H1 (cell line): ENCODE measurements at regions of chr5 and their contacts with region 1.

Region 1: GRCh38 chr5:142699184-142699720 is 13.4 kb upstream of the FGF1 start:
- DNase-seq: peak; percentile 74 to 96
- H3K4me3 ChIP-seq: no peak overlapping the region
- H3K27ac ChIP-seq: no peak overlapping the region
- H3K4me1 ChIP-seq: peaks cover 3 to 30% (median 14%) of the 10 kb centered on the region in 4 experiments
- H3K27me3 ChIP-seq: no peaks in the 10 kb centered on the region
- CTCF ChIP-seq: peak; percentile 83 to 99 (median 97)
- EP300 ChIP-seq: no peak
- POLR2A ChIP-seq: no peak
- RAD21 ChIP-seq: peak; percentile 100

Region 2: DNA sequence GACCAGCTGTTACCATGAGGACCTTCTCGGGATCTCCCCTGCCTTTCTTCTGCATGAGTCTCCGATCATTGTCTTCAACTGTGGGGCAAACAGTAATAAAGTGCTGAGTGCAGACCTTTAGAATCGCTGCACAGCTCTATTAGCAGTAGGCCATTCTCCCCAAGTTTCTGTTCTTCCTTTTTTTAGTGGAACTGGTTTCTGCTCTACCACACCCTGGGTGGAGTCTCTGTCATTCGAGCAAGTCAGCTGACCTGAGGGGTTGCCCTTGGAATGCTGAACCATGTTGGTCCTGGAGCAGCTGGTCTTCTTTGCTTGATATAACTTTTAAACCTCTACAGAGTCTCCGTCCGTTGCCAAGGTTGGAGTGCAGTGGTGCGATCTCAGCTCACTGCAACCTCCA is 653.1 kb before region 1 on chr5:
- CTCF ChIA-PET with region 1: no interaction called
- POLR2A ChIA-PET with region 1: no interaction called
- DNase-seq: no peak
- H3K4me3 ChIP-seq: no peak overlapping the region
- H3K27ac ChIP-seq: no peak overlapping the region
- H3K4me1 ChIP-seq: peaks cover 0 to 5% (median under 1%) of the 10 kb centered on the region in 4 experiments; a peak in 2 of 7 replicates
- H3K27me3 ChIP-seq: no peaks in the 10 kb centered on the region
- CTCF ChIP-seq: no peak
- EP300 ChIP-seq: no peak
- POLR2A ChIP-seq: no peak
- RAD21 ChIP-seq: no peak

Region 3: DNA sequence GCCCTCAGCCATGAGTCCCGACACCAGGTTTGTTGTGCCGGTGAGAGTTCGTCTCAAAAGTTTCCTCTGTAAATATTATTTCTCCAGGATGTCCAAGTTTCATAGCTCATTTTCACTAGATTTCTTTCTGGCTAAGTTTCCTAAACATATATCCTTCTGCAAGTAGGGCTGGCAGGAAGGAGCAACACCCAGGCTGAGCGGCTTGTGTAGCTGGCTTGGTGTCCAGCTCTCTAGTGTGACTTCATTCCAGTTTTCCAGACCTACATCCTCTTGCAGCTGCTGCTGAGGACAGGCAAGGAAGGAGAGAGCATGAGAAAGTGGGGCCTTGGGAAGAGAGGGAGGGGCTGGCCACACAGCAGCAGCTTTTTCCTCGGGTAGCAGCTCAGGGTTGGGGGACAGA is 93.6 kb before region 1 on chr5:
- CTCF ChIA-PET with region 1: interaction called, 65 read pairs
- POLR2A ChIA-PET with region 1: no interaction called
- DNase-seq: no peak
- H3K4me3 ChIP-seq: no peak overlapping the region
- H3K27ac ChIP-seq: no peak overlapping the region
- H3K4me1 ChIP-seq: no peaks in the 10 kb centered on the region; a peak in 1 of 7 replicates
- H3K27me3 ChIP-seq: no peaks in the 10 kb centered on the region
- CTCF ChIP-seq: no peak
- EP300 ChIP-seq: no peak
- POLR2A ChIP-seq: no peak
- RAD21 ChIP-seq: no peak

Region 4: GRCh38 chr5:142627383-142628255 is 71.6 kb before region 1 on chr5:
- CTCF ChIA-PET with region 1: interaction called, 15 read pairs
- POLR2A ChIA-PET with region 1: no interaction called
- DNase-seq: no peak
- H3K4me3 ChIP-seq: no peak overlapping the region
- H3K27ac ChIP-seq: no peak overlapping the region
- H3K4me1 ChIP-seq: peaks cover 0 to 8% (median 0%) of the 10 kb centered on the region in 4 experiments; a peak in 2 of 7 replicates
- H3K27me3 ChIP-seq: no peaks in the 10 kb centered on the region
- CTCF ChIP-seq: no peak
- EP300 ChIP-seq: no peak
- POLR2A ChIP-seq: no peak
- RAD21 ChIP-seq: no peak

Region 5: DNA sequence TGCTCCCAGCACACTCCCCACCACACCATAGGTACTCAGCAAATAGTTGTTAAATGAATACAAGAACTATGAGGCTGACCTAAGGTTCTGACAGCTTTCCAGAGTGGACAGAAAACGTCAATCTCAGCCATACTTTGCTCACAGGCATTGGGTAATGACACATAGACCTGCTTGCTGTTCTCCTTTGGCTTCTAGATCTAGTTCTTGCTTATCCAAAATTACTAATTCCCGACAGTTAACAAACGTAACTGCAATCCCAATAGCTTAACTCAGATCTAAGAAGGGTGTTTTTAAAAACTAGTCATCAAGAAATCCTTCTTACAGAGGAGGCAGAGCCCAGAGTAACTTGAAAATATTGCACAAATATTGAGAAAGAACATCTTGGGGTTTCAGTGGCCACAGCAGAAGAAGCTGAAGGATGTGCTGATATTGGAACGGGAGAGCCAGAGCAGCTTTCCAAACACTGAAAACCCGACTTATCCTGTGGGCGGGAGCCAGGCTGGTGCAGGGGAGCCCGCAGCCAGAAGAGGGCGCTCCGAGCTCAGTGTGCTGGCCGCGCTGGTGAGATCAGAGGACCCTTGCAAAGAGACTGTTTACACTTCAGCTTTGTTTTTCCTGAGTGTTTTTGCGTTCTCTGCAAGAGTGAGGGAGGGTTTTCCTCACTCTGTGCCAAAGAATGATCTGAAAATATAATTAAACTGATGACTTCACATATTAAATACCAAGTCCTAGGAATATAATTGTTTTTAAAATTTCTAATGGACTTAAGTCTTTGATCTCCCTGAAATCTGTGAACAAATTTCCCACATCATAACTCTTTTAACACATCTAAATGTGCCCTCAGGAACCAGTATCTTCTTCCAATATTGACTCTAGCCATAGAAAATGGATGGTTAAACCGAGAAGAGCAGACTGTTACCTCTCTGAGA is 43.6 kb before region 1 on chr5:
- CTCF ChIA-PET with region 1: interaction called, 605 read pairs
- POLR2A ChIA-PET with region 1: interaction called, 5 read pairs
- DNase-seq: peak; percentile 53 to 96
- H3K4me3 ChIP-seq: no peak overlapping the region
- H3K27ac ChIP-seq: no peak overlapping the region
- H3K4me1 ChIP-seq: no peaks in the 10 kb centered on the region
- H3K27me3 ChIP-seq: no peaks in the 10 kb centered on the region
- CTCF ChIP-seq: peak; percentile 98 to 99 (median 99)
- EP300 ChIP-seq: no peak
- POLR2A ChIP-seq: no peak
- RAD21 ChIP-seq: peak; percentile 98

Region 6: GRCh38 chr5:142685418-142686209 is 13.6 kb before region 1 on chr5 and contains the start of gene FGF1:
- CTCF ChIA-PET with region 1: interaction called, 47 read pairs
- POLR2A ChIA-PET with region 1: interaction called, 5 read pairs
- DNase-seq: no peak
- H3K4me3 ChIP-seq: no peak within 1 kb of the TSS
- H3K27ac ChIP-seq: peak within 1 kb of the TSS; percentile 37
- H3K4me1 ChIP-seq: peaks cover 3 to 33% (median 23%) of the 10 kb centered on the region in 4 experiments
- H3K27me3 ChIP-seq: no peaks in the 10 kb centered on the region
- CTCF ChIP-seq: no peak
- EP300 ChIP-seq: no peak
- POLR2A ChIP-seq: no peak
- RAD21 ChIP-seq: no peak
- total RNA-seq, gene FGF1: 0.11 and 0.50 TPM in 2 replicates

Region 7: DNA sequence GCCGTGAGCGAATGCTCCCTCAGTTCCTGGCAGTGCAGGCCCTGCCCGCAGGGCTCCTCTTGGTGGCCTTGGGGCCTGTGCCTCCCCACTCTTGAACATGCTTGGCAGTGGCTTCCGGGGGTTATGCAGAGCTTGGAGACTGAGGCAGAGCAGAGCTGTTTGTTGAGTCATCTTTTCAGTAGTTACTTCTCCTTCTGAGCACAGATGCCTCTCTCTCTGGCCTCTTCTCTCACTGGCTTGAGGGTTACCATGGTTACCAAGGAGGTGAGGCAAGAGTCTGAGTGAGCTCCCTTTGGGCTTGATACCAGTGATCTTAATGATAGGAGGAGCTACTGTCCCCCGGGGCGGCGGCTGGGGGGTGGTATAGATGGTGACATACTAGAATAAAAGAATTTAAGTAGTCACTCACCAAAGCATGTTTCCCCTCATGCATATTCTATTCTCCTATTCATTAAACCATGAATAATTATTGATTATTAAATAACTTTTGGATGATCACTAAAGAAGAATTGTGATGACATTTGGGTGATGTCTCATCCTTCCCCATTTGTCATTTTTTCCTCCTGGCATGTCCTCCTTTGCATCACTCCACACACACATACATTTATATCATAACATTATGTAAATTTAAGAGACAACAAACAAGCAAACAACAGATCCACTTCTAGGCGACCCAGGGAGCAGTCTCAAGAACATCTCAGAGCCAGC is 182.0 kb after region 1 on chr5:
- CTCF ChIA-PET with region 1: interaction called, 16 read pairs
- POLR2A ChIA-PET with region 1: no interaction called
- DNase-seq: no peak
- H3K4me3 ChIP-seq: peak overlapping the region in 1 of 4 experiments; percentile 29; a peak in 1 of 8 replicates
- H3K27ac ChIP-seq: 0 out of 2 replicates have a peak overlapping the region, but pooled peaks have one; percentile 6
- H3K4me1 ChIP-seq: peaks cover 10 to 22% (median 15%) of the 10 kb centered on the region in 4 experiments
- H3K27me3 ChIP-seq: no peaks in the 10 kb centered on the region
- CTCF ChIP-seq: no peak
- EP300 ChIP-seq: no peak
- POLR2A ChIP-seq: no peak
- RAD21 ChIP-seq: no peak

Region 8: GRCh38 chr5:142922223-142922952 is 223.1 kb after region 1 on chr5:
- CTCF ChIA-PET with region 1: no interaction called
- POLR2A ChIA-PET with region 1: no interaction called
- DNase-seq: no peak
- H3K4me3 ChIP-seq: no peak overlapping the region
- H3K27ac ChIP-seq: no peak overlapping the region
- H3K4me1 ChIP-seq: no peaks in the 10 kb centered on the region
- H3K27me3 ChIP-seq: no peaks in the 10 kb centered on the region
- CTCF ChIP-seq: peak in 1 of 3 experiments; percentile 29; a peak in 2 of 4 replicates
- EP300 ChIP-seq: no peak
- POLR2A ChIP-seq: no peak
- RAD21 ChIP-seq: peak in 1 of 2 experiments; percentile 42; a peak in 2 of 4 replicates